Transverse colon (tissue), 4 donors: ENCODE measurements at regions of chr19 and their contacts with region 1.

Region 1: GRCh38 chr19:577453-578392 is 5.3 kb downstream of the BSG start:
- DNase-seq: no peak
- H3K4me3 ChIP-seq: no peak overlapping the region
- H3K27ac ChIP-seq: no peak overlapping the region
- H3K4me1 ChIP-seq: peaks cover 19 to 40% (median 35%) of the 10 kb centered on the region in 4 donors
- H3K27me3 ChIP-seq: no peaks in the 10 kb centered on the region
- CTCF ChIP-seq: no peak
- EP300 ChIP-seq: no peak
- POLR2A ChIP-seq: no peak

Region 2: GRCh38 chr19:548841-549830 is 28.6 kb before region 1 on chr19:
- in situ Hi-C with region 1: no loop called
- intact Hi-C with region 1: loop called (anchors 2 kb)
- DNase-seq: no peak
- H3K4me3 ChIP-seq: no peak overlapping the region
- H3K27ac ChIP-seq: no peak overlapping the region
- H3K4me1 ChIP-seq: peaks cover 0 to 21% (median 12%) of the 10 kb centered on the region in 4 donors
- H3K27me3 ChIP-seq: no peaks in the 10 kb centered on the region
- CTCF ChIP-seq: no peak
- EP300 ChIP-seq: no peak
- POLR2A ChIP-seq: no peak

Region 3: GRCh38 chr19:620166-620862 is 42.6 kb after region 1 on chr19:
- in situ Hi-C with region 1: no loop called
- intact Hi-C with region 1: loop called (anchors 1 kb)
- DNase-seq: no peak
- H3K4me3 ChIP-seq: no peak overlapping the region
- H3K27ac ChIP-seq: no peak overlapping the region
- H3K4me1 ChIP-seq: peaks cover 0 to 7% (median 4%) of the 10 kb centered on the region in 4 donors
- H3K27me3 ChIP-seq: peaks cover 10% of the 10 kb centered on the region
- CTCF ChIP-seq: no peak
- EP300 ChIP-seq: no peak
- POLR2A ChIP-seq: no peak